WTC11 (cell line): ENCODE measurements at regions of chr20 and their contacts with region 1.

Region 1: GRCh38 chr20:36199345-36200257 is 36.7 kb upstream of the AAR2 start:
- DNase-seq: peak; percentile 93
- ATAC-seq: peak; percentile 86
- H3K4me3 Mint-ChIP-seq: no peak overlapping the region
- H3K27ac Mint-ChIP-seq: no peak overlapping the region
- H3K4me1 Mint-ChIP-seq: peaks cover 4% of the 10 kb centered on the region
- H3K27me3 Mint-ChIP-seq: no peaks in the 10 kb centered on the region
- CTCF ChIP-seq: peak; percentile 86

Region 2: GRCh38 chr20:36154700-36155628 is 44.6 kb before region 1 on chr20 and contains the start of gene EPB41L1:
- CTCF ChIA-PET with region 1: interaction called, 93 read pairs
- POLR2A ChIA-PET with region 1: no interaction called
- DNase-seq: peak; percentile 57
- ATAC-seq: peak; percentile 49
- H3K4me3 Mint-ChIP-seq: peak within 1 kb of the TSS; percentile 78
- H3K27ac Mint-ChIP-seq: no peak within 1 kb of the TSS
- H3K4me1 Mint-ChIP-seq: peaks cover 23% of the 10 kb centered on the region
- H3K27me3 Mint-ChIP-seq: peaks cover 21% of the 10 kb centered on the region
- CTCF ChIP-seq: no peak
- total RNA-seq, gene EPB41L1: 37.7 to 38.7 TPM (median 38.1 TPM) in 3 replicates

Region 3: DNA sequence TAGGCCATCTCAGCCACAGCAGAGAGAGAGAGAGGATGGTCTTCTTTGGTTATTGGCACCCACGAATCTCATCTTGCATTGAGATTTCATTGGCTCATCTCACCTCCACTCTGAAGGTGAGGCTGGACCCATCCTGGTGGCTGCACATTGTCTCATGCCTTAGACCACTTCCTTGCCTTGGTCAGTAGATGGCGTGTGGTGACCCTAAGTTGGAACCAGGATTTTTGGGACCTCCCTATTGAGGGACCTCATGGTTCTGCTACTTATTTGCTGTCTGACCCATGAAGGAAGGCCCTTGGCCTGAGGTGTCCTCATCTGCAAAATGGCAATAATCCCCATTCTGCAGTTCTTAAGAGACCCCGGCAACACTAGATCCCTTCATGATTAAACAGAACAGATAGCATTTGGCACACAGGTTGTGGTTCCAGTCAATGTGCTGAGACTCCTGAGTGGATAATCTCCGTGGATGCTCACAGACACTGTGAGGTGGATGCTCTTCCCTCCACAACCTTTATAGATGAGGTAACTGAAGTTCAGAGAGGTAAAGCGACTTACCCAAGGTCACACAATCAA is 15.2 kb after region 1 on chr20:
- CTCF ChIA-PET with region 1: interaction called, 32 read pairs
- POLR2A ChIA-PET with region 1: no interaction called
- DNase-seq: peak; percentile 43
- ATAC-seq: peak; percentile 77
- H3K4me3 Mint-ChIP-seq: no peak overlapping the region
- H3K27ac Mint-ChIP-seq: no peak overlapping the region
- H3K4me1 Mint-ChIP-seq: no peaks in the 10 kb centered on the region; the same call in 1 of the 2 replicates
- H3K27me3 Mint-ChIP-seq: no peaks in the 10 kb centered on the region
- CTCF ChIP-seq: peak; percentile 45; the same call in 1 of the 2 replicates

Region 4: DNA sequence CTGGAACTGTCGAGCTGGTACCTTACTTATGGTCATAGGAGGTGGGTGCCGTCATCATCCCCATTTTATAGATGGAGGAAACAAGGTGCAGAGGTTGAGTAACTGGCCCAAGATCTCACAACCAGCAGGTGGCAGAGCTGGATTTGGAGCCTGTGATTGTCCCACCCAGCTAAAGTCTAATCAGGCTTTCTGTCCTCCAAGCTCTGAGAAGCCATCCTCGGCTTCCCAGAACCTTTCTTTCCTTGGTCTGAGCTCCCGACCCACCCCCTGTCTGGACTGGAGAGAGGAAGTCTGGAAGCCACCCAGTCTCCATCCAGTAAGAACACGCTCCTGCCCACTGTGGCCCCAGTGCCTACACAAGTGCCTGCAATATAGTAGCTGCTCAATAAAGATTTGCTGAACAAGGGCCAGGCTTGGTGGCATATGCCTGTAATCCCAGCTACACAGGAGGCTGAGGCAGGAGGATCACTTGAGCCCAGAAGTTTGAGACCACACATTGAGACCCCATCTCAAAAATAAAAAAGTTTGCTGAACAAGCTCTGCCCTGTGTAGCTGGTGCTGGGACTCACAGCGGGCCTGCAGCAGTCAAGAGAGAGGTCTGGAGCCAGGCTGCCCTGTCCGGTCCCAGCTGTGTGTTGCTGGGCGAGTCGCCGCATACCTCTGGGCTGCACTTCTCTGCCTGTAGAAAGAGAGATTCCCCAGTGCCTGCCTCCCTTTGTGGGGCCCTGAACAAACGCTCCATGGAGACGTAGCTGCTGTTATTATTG is 74.0 kb after region 1 on chr20:
- CTCF ChIA-PET with region 1: interaction called, 19 read pairs
- POLR2A ChIA-PET with region 1: no interaction called
- DNase-seq: no peak
- ATAC-seq: no peak; the same call in 1 of the 2 replicates
- H3K4me3 Mint-ChIP-seq: no peak overlapping the region
- H3K27ac Mint-ChIP-seq: no peak overlapping the region
- H3K4me1 Mint-ChIP-seq: peaks cover 25% of the 10 kb centered on the region
- H3K27me3 Mint-ChIP-seq: no peaks in the 10 kb centered on the region; the same call in 1 of the 2 replicates
- CTCF ChIP-seq: no peak

Region 5: GRCh38 chr20:36439040-36439730 is 239.6 kb after region 1 on chr20:
- CTCF ChIA-PET with region 1: interaction called, 46 read pairs
- POLR2A ChIA-PET with region 1: no interaction called
- DNase-seq: peak; percentile 93
- ATAC-seq: peak; percentile 66
- H3K4me3 Mint-ChIP-seq: no peak overlapping the region
- H3K27ac Mint-ChIP-seq: no peak overlapping the region
- H3K4me1 Mint-ChIP-seq: peaks cover 4% of the 10 kb centered on the region
- H3K27me3 Mint-ChIP-seq: peaks cover 19% of the 10 kb centered on the region
- CTCF ChIP-seq: peak; percentile 91